Endothelial cell of umbilical vein (primary cell): ENCODE measurements at regions of chr20 and their contacts with region 1.

Region 1: DNA sequence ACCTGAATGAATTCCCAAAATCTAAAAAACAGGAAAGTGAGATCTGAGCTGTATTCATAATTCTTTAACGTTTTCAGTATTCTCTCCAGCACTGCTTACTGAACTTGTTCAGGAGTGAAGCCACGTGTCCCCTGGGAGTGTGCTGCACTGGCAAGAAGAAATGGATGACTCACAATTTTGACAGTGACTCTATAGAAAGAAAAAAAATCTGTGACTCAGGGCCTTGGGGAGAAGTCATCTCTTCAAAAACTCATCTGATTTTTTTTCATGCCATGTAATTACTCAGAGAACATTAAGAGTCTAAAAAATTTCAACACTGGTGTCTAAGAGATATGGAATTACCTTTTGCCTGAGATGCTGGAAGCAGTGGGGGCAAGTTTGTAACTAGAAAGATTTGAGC is 39.7 kb downstream of the ANKEF1 start:
- DNase-seq: peak; percentile 76
- H3K4me3 ChIP-seq: no peak overlapping the region
- H3K27ac ChIP-seq: peak overlapping the region; percentile 50
- H3K4me1 ChIP-seq: peaks cover 43% of the 10 kb centered on the region
- H3K27me3 ChIP-seq: no peaks in the 10 kb centered on the region
- CTCF ChIP-seq: no peak
- POLR2A ChIP-seq: no peak

Region 2: DNA sequence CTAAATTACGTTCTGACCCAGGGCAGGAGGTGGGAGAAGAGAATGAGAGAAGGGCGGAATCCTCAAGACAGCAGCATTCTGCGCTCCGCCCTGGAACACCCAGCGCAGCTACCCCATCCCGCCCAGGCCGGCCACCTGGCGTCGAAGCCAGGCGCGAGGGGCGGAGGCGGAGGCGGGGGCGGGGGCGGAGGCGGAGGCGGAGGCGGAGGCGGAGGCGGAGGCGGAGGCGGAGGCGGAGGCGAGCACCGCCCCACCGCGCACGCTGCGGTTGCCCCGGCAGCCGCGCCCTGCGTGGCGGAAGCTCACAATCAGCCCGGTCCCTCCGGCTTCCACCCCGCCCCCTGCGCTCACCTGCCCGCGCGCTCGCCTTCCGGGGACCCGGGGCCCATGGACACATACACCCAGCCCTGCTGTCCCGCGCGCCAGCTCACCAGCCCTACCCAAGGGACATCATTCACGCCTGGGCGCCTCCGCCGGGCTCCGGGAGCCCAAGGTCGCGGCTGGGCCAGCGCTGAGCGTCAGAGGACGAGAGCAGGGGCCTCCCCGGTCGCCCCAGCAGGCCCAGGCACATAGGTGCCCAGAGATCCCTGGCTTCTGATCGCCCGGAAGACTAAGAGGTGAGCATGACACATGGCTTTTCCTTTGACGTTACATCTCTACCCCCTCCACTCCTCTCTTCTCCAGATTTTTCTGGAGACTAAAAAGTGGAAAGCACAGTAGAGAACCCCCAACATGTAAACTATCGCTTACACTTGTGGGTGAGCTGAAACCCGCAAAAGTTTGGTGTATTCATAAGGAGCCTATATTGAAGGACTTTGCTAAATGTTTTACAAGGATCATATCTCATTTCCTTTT is 39.6 kb before region 1 on chr20 and contains the start of gene ANKEF1:
- CTCF ChIA-PET with region 1: interaction called, 10 read pairs
- POLR2A ChIA-PET with region 1: no interaction called
- dilution Hi-C with region 1: no loop called
- intact Hi-C with region 1: loop called (anchors 1 kb)
- DNase-seq: peak; percentile 64
- H3K4me3 ChIP-seq: peak within 1 kb of the TSS; percentile 48 to 88 (median 60)
- H3K27ac ChIP-seq: peak within 1 kb of the TSS; percentile 58
- H3K4me1 ChIP-seq: peaks cover 5% of the 10 kb centered on the region
- H3K27me3 ChIP-seq: peaks cover 0 to 2% of the 10 kb centered on the region in 2 experiments
- CTCF ChIP-seq: no peak
- POLR2A ChIP-seq: no peak
- total RNA-seq, gene ANKEF1: 1.8 and 2.4 TPM in 2 replicates

Region 3: GRCh38 chr20:10090588-10091166 is 16.2 kb after region 1 on chr20:
- CTCF ChIA-PET with region 1: interaction called, 72 read pairs
- POLR2A ChIA-PET with region 1: interaction called, 3 read pairs
- dilution Hi-C with region 1: no loop called
- intact Hi-C with region 1: no loop called
- DNase-seq: peak; percentile 67
- H3K4me3 ChIP-seq: no peak overlapping the region
- H3K27ac ChIP-seq: no peak overlapping the region
- H3K4me1 ChIP-seq: no peaks in the 10 kb centered on the region
- H3K27me3 ChIP-seq: no peaks in the 10 kb centered on the region
- CTCF ChIP-seq: peak; percentile 69 to 78
- POLR2A ChIP-seq: no peak

Region 4: GRCh38 chr20:10306440-10307358 is 232.2 kb after region 1 on chr20:
- CTCF ChIA-PET with region 1: interaction called, 4 read pairs
- POLR2A ChIA-PET with region 1: no interaction called
- dilution Hi-C with region 1: no loop called
- intact Hi-C with region 1: loop called (anchors 2 kb)
- DNase-seq: peak; percentile 68
- H3K4me3 ChIP-seq: no peak overlapping the region
- H3K27ac ChIP-seq: peak overlapping the region; percentile 87
- H3K4me1 ChIP-seq: peaks cover 38% of the 10 kb centered on the region
- H3K27me3 ChIP-seq: no peaks in the 10 kb centered on the region
- CTCF ChIP-seq: no peak
- POLR2A ChIP-seq: peak; percentile 64

Region 5: DNA sequence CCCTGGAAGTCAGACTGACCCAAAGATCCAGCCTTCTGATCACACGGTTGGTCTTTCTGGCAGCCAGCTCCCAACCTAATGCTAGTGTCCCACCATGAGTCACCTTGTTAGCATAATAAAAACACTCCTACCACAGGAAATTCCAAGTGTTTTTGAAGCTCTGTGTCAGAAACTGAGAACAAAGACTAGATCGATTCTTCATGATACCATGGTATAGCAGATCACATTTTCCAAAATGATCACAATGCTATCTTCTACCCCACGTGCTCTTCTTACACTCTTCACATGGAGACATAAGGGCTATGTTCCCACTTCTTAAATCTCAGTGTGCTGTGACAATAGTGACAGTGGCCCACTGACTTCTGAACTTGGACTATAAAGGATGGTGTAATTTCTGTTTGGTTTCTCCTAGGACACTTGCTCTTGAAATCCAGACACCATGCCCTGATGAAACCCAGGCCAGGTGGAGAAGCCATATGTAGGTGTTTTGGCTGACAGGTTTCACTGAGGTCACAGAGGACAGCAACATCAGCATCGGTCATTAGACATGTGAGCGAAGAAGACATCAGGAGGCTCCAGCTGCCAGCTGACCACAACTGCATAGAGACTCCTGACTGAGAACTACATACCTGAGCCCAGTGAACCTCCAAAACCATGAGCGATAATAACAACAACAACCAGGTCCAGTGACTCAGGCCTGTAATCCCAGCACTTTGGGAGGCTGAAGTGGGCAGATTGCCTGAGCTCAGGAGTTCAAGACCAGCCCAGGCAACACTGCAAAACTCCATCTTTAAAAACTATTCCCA is 302.0 kb after region 1 on chr20:
- CTCF ChIA-PET with region 1: no interaction called
- POLR2A ChIA-PET with region 1: no interaction called
- dilution Hi-C with region 1: no loop called
- intact Hi-C with region 1: loop called (anchors 5 kb)
- DNase-seq: peak; percentile 84
- H3K4me3 ChIP-seq: no peak overlapping the region
- H3K27ac ChIP-seq: peak overlapping the region; percentile 74
- H3K4me1 ChIP-seq: peaks cover 17% of the 10 kb centered on the region
- H3K27me3 ChIP-seq: no peaks in the 10 kb centered on the region
- CTCF ChIP-seq: no peak
- POLR2A ChIP-seq: peak; percentile 26

Region 6: GRCh38 chr20:10434832-10435812 is 360.6 kb after region 1 on chr20 and contains the start of gene SLX4IP:
- CTCF ChIA-PET with region 1: no interaction called
- POLR2A ChIA-PET with region 1: interaction called, 4 read pairs
- dilution Hi-C with region 1: no loop called
- intact Hi-C with region 1: loop called (anchors 5 kb)
- DNase-seq: peak; percentile 95
- H3K4me3 ChIP-seq: peak within 1 kb of the TSS; percentile 96 to 99 (median 97)
- H3K27ac ChIP-seq: peak within 1 kb of the TSS; percentile 97
- H3K4me1 ChIP-seq: peaks cover 15% of the 10 kb centered on the region
- H3K27me3 ChIP-seq: no peaks in the 10 kb centered on the region
- CTCF ChIP-seq: no peak
- POLR2A ChIP-seq: peak; percentile 63
- total RNA-seq, gene SLX4IP: 4.1 and 4.5 TPM in 2 replicates

Region 7: GRCh38 chr20:12053353-12053752 is 1978.8 kb after region 1 on chr20:
- CTCF ChIA-PET with region 1: no interaction called
- POLR2A ChIA-PET with region 1: no interaction called
- dilution Hi-C with region 1: no loop called
- intact Hi-C with region 1: loop called (anchors 5 kb)
- DNase-seq: peak; percentile 90
- H3K4me3 ChIP-seq: no peak overlapping the region
- H3K27ac ChIP-seq: peak overlapping the region; percentile 90
- H3K4me1 ChIP-seq: peaks cover 34% of the 10 kb centered on the region
- H3K27me3 ChIP-seq: no peaks in the 10 kb centered on the region
- CTCF ChIP-seq: no peak
- POLR2A ChIP-seq: no peak